ENCODE measurements at regions of chr1 and their contacts with region 1.

Region 1: GRCh38 chr1:87151500-87152421 is 176.9 kb upstream of the LMO4 start:
- DNase-seq: peak; percentile 92

Region 2: DNA sequence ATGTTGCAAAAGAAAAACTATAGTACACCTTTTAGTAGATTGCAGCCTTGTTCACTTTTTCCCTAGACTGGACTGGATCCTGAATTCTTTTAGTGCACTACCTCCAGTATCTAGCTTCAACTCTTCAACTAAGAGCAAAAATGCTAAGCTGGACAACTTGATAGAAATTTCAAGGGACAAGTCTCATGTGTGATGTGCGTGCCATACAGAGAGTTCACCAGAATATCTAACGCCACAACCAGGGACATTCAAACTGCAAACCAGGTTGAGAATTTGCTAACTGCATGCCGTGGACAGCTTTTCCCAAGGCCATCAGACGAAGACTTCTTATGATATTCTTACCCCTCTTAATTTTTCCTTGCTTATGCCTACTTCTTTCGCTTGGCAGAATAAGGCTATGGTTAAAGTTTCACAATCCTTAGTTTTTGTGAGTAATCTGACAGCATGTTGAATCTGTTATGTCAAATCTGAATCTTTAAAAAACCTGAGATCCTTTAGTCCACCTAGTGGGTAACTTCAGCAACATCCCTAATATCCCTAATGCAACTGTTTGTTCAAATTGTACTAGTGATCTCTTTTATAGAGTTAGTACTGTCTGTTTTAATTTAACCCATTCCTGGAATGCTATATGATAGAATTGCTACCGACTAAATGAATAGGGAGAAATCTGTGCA is 1753.2 kb before region 1 on chr1:
- intact Hi-C with region 1: no loop called
- DNase-seq: no peak

Region 3: GRCh38 chr1:87279966-87280535 is 128.3 kb after region 1 on chr1:
- intact Hi-C with region 1: loop called in 1 of 2 experiments (anchors 10 kb)
- DNase-seq: no peak

Measured in posterior vena cava (tissue), 2 donors.